ENCODE measurements at regions of chr1 and their contacts with region 1.

Region 1: GRCh38 chr1:203440771-203441170 is 34.8 kb upstream of the PRELP start:
- DNase-seq: peak; percentile 92

Region 2: GRCh38 chr1:203346060-203346768 is 94.6 kb before region 1 on chr1:
- intact Hi-C with region 1: loop called in 1 of 2 experiments (anchors 5 kb)
- DNase-seq: no peak

Region 3: GRCh38 chr1:203368624-203369451 is 71.9 kb before region 1 on chr1:
- intact Hi-C with region 1: loop called in 1 of 2 experiments (anchors 5 kb)
- DNase-seq: peak; percentile 87

Region 4: DNA sequence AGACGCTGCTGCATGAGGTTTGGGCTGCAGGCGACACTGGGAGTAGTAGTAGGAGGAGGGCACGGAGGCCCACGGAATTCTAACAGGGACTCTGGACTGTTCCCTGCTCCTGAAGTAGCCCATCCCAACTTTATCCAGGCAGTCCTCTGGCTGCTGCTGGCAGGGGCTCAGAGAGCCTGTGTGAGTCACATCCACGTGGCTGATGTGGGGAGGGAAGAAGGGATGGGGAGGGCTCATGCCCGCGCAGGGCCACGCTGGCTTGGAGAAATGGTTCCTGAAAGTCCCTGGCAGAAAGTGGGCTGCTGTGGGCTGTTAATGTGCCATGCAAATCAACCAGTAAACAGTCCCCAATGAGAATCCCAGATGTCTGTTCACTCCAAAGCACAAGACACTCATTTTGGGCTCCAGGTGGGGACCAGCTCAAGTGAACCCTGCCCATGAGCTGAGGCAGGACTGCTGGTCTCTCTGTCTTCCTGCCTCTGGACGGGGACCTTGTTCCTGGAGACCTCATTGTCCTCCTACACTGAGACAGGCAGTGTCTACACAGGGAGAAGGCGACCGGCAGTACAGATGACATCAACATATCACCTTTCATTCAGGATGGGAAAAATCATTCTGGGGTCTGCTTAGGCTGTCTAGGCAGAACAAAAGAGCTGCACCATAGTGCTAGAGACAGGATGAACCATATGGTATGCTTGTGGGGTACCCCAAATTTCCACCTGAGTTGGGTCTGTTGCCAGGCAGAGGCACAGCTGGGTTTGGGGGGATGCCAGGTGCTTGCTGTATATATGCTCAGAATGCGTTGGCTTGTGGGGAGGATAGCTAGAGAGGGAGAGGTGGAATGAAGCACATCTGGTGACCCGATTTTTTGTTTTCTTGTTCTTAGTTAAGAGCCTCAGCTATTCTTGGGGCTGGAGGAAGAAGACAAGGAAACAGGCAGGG is 32.0 kb before region 1 on chr1:
- intact Hi-C with region 1: loop called in 1 of 2 experiments (anchors 5 kb)
- DNase-seq: peak; percentile 96